Activated CD8-positive, alpha-beta memory T cell treated with anti-CD3 and anti-CD28 coated beads, Interleukin-2, amount 10 ng/mL, durations not matched to agents 7 days and 5 days (primary cell): ENCODE measurements at regions of chr14 and their contacts with region 1.

Region 1: GRCh38 chr14:100677554-100678468 is 48.9 kb upstream of the DLK1 start:
- DNase-seq: no peak
- ATAC-seq: no peak
- H3K4me3 Mint-ChIP-seq: no peak overlapping the region
- H3K27ac Mint-ChIP-seq: no peak overlapping the region
- H3K4me1 Mint-ChIP-seq: no peaks in the 10 kb centered on the region
- H3K27me3 Mint-ChIP-seq: peaks cover 28% of the 10 kb centered on the region

Region 2: DNA sequence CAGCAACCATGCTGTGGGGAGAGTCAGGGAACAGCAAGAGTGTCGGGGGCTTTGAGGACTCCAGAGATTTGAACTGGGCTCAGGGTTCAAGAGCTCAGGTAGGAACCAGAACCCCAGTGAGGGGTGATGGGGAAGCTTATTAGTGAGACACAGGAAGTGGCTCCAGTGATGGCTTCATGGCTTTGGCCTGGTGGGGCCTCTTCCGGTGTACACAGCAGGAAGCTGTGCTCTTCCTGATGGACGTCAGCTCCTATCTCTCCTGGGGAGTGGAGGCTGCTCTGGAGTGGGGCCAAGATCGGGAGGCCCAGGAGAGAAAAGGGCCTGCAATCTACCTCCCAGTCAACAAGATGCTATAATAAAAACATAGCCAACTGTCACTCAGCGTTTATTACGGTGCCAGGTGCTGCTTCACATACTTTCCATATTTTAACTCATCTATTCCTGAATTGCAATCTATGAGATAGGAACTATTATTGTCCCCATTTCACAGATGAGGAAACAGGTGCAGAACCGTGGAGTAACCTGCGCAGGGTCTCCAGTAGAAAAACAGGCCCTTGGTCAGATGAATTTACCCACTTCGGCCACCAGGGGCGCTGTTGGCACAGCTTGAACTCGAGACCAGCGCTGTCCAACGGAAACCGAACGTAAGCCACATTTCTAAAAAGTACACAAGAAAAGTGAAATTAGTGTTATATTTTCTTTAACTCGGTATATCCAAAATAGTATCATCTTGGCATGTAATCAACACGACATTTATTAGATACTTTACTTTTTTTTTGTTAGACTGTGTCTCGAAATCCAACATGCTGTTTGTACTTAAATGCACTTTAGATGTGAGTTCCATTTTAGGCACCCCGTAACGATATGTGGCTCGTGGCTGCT is 14.7 kb before region 1 on chr14:
- CTCF ChIA-PET with region 1: interaction called, 18 read pairs
- DNase-seq: peak; percentile 71
- ATAC-seq: peak; percentile 66
- H3K4me3 Mint-ChIP-seq: no peak overlapping the region
- H3K27ac Mint-ChIP-seq: peak overlapping the region; percentile 30
- H3K4me1 Mint-ChIP-seq: peaks cover 6% of the 10 kb centered on the region
- H3K27me3 Mint-ChIP-seq: peaks cover 4% of the 10 kb centered on the region